ENCODE measurements at regions of chr3 and their contacts with region 1.

Region 1: GRCh38 chr3:134473868-134474546 is 11.8 kb downstream of the ANAPC13 start:
- DNase-seq: no peak
- ATAC-seq: peak; percentile 84
- H3K4me3 ChIP-seq: no peak overlapping the region
- H3K27ac ChIP-seq: no peak overlapping the region
- H3K4me1 ChIP-seq: peaks cover 27% of the 10 kb centered on the region
- H3K27me3 ChIP-seq: no peaks in the 10 kb centered on the region
- CTCF ChIP-seq: peak; percentile 83

Region 2: GRCh38 chr3:133910422-133910821 is 563.6 kb before region 1 on chr3:
- intact Hi-C with region 1: no loop called
- DNase-seq: no peak
- ATAC-seq: no peak
- H3K4me3 ChIP-seq: no peak overlapping the region
- H3K27ac ChIP-seq: no peak overlapping the region
- H3K4me1 ChIP-seq: no peaks in the 10 kb centered on the region
- H3K27me3 ChIP-seq: peaks cover 8% of the 10 kb centered on the region
- CTCF ChIP-seq: no peak

Region 3: GRCh38 chr3:134312873-134313846 is 160.8 kb before region 1 on chr3:
- intact Hi-C with region 1: loop called (anchors 5 kb)
- DNase-seq: peak; percentile 88
- ATAC-seq: peak; percentile 71
- H3K4me3 ChIP-seq: peak overlapping the region; percentile 55
- H3K27ac ChIP-seq: peak overlapping the region; percentile 95
- H3K4me1 ChIP-seq: peaks cover 69% of the 10 kb centered on the region
- H3K27me3 ChIP-seq: no peaks in the 10 kb centered on the region
- CTCF ChIP-seq: peak; percentile 40

Region 4: DNA sequence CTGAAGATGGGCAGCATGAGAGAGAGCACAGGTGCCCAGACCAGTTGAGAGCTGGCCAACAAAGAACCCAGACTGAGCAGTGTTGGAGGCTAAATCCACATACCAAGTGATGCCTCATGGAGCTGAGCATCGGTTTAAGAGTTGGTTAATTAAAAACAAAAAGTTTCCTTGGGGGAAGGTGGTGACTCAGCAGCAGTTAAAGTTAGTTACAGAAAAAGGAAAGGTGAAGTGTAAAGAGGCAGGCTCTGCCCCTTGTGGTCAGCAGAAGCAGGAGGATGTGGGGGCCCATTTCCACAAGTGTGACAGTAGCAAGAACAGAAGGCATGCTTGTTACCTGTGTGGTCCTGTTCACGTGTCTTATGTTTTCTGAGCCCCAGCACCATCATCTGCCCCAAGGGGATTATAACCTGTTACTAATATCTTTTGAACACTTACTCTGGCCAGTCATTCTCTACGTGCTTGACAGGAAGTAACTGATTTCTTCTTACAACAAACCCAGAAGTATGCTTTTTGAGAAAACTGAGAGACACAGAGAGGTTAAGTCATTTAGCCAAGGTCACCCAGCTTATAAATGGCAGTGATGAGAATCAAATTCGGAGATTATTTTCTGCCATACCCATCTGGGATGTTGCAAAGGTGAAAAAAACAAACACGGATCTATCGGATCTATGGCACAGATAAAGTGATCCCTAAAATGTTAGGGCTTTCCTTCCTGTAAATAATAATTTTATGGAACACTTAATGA is 412.0 kb after region 1 on chr3:
- intact Hi-C with region 1: no loop called
- DNase-seq: no peak
- ATAC-seq: no peak
- H3K4me3 ChIP-seq: no peak overlapping the region
- H3K27ac ChIP-seq: no peak overlapping the region
- H3K4me1 ChIP-seq: no peaks in the 10 kb centered on the region
- H3K27me3 ChIP-seq: no peaks in the 10 kb centered on the region
- CTCF ChIP-seq: no peak

Measured in upper lobe of right lung (tissue), 1 donor.